ENCODE measurements at regions of chr7 and their contacts with region 1.

Region 1: DNA sequence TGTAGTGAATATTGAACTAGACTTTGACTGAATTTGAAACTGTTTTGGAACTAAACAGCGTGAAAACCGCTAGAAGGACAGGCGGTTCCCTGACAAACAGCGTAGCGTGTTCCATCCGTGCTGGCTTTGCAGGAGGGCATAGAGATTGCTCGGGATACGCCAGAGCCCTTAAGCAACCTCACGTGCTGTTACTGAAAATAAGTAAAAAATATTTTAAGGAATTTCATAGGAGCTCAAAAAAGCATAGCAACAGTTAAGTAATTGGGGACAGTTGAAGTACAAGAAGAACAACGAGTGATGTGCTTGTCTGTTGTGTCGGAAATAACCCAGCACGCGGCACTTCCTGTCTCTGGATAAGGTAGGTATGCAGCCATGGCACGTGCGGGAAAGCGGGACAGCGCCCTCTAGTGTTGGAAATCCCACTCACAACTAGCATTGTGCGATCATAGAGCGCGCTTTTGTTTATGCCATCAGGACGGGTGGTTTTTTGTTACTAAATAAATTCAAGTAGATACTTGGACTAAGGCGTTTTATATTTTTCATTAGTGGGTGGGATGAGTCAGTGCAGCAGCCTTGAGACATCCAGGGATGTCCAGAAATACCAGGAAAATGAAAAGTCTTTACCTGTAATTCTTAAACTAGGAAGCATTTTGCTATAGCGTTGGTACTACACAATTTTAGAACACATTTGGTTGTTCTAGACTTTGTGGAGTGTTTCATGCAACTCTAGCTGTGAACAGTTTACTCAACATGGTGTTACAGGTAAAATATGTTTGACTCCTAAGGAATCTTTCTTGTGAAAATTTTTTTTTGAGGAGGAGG is 50.4 kb downstream of the DNAJB6 start:
- DNase-seq: peak; percentile 85 to 94 (median 93)
- H3K4me3 ChIP-seq: peak overlapping the region in 1 of 7 experiments; percentile 9
- H3K27ac ChIP-seq: peak overlapping the region in 1 of 2 experiments; percentile 12
- H3K4me1 ChIP-seq: peaks cover 20 to 51% (median 48%) of the 10 kb centered on the region in 4 experiments
- H3K27me3 ChIP-seq: no peaks in the 10 kb centered on the region

Region 2: GRCh38 chr7:157397731-157398691 is 10.8 kb after region 1 on chr7:
- CTCF ChIA-PET with region 1: interaction called, 33 read pairs
- POLR2A ChIA-PET with region 1: interaction called, 10 read pairs
- DNase-seq: peak; percentile 66 to 75 (median 75)
- H3K4me3 ChIP-seq: peak overlapping the region in 3 of 7 experiments; percentile 27 to 65 (median 43)
- H3K27ac ChIP-seq: peak overlapping the region; percentile 62 to 81
- H3K4me1 ChIP-seq: peaks cover 6 to 86% (median 74%) of the 10 kb centered on the region in 4 experiments
- H3K27me3 ChIP-seq: no peaks in the 10 kb centered on the region

Region 3: GRCh38 chr7:157404845-157405481 is 17.8 kb after region 1 on chr7:
- CTCF ChIA-PET with region 1: interaction called, 33 read pairs
- POLR2A ChIA-PET with region 1: interaction called, 10 read pairs
- DNase-seq: peak; percentile 74 to 81 (median 80)
- H3K4me3 ChIP-seq: no peak overlapping the region
- H3K27ac ChIP-seq: peak overlapping the region in 1 of 2 experiments; percentile 45
- H3K4me1 ChIP-seq: peaks cover 0 to 67% (median 61%) of the 10 kb centered on the region in 4 experiments
- H3K27me3 ChIP-seq: no peaks in the 10 kb centered on the region

Measured in common myeloid progenitor, CD34-positive (primary cell).